HEK293 (cell line): ENCODE measurements at regions of chr19 and their contacts with region 1.

Region 1: DNA sequence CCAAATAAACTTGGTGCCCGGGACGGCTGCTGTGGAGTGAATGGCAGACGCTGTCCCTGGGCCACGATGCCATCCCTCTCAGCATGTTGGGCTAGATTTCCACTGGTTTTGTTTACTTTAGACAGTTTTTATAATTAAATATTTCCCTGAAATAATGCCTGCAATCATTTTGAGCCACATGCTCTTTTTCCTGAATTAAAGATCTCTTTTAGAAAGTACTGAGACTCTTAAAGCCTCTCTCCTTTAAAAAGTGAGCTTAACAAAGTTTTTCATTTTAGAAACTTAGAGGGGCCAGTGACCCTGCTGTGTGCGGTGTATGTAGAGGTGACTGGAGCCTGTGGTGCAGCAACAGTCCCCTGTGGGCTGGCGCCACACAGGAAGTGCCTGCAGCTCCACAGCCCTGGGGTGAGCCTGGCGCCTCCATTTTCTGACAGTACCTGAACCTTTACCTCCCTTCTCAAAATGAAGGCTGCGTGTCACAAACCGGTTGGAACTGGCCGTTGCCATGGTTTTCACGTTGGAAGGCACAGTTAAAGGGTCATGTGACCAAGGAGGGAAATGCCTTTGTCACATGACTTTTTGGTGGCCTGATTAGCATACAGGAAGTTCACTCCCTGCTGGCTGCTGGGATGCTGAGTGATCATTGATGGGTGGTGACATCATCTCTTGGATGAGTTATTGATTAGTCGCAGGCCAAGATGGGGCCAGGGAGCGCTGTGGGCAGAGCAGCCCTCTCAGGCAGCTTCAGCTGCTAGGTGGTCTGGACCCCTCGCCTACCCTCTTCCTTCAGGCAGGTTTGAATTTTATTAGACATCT is 26.3 kb downstream of the TSSK6 start:
- H3K4me3 ChIP-seq: no peak overlapping the region; the same call in 1 of the 2 replicates
- H3K27ac ChIP-seq: no peak overlapping the region; the same call in 1 of the 2 replicates
- H3K4me1 ChIP-seq: peaks cover 11% of the 10 kb centered on the region
- CTCF ChIP-seq: no peak

Region 2: DNA sequence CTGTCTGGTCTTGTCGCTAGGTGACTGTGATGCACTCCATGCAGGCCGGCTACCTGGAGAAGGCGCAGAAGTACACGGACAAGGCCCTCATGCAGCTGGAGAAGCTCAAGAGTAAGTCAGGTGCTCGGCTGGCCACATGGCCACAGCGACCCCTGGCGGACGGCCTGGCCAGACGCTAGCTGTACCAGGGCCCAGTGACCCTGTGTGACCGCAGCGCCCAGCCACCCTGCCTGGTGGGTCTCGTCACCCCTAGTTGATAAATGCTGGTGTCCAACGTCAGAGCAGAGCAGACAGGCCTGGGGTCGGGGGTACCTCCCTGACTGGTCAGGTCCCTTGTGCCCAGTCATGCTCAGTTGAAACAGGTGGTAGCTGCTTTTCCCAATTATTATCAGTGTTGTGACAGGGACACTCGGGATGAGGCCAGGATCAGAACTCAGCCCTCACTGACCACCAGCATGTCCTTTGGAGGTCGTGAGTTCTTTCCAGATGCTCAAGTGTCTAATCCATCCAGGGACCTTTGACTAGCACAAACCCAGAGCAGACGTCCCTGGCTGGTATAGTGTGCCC is 146.2 kb before region 1 on chr19:
- CTCF ChIA-PET with region 1: interaction called, 10 read pairs
- POLR2A ChIA-PET with region 1: interaction called, 3 read pairs
- H3K4me3 ChIP-seq: no peak overlapping the region
- H3K27ac ChIP-seq: no peak overlapping the region
- H3K4me1 ChIP-seq: no peaks in the 10 kb centered on the region
- CTCF ChIP-seq: peak; percentile 64

Region 3: GRCh38 chr19:19366612-19367396 is 122.3 kb before region 1 on chr19:
- CTCF ChIA-PET with region 1: interaction called, 49 read pairs
- POLR2A ChIA-PET with region 1: interaction called, 5 read pairs
- H3K4me3 ChIP-seq: peak overlapping the region; percentile 14
- H3K27ac ChIP-seq: peak overlapping the region; percentile 34; the same call in 1 of the 2 replicates
- H3K4me1 ChIP-seq: peaks cover 2% of the 10 kb centered on the region; the same call in 1 of the 2 replicates
- CTCF ChIP-seq: peak; percentile 88

Region 4: DNA sequence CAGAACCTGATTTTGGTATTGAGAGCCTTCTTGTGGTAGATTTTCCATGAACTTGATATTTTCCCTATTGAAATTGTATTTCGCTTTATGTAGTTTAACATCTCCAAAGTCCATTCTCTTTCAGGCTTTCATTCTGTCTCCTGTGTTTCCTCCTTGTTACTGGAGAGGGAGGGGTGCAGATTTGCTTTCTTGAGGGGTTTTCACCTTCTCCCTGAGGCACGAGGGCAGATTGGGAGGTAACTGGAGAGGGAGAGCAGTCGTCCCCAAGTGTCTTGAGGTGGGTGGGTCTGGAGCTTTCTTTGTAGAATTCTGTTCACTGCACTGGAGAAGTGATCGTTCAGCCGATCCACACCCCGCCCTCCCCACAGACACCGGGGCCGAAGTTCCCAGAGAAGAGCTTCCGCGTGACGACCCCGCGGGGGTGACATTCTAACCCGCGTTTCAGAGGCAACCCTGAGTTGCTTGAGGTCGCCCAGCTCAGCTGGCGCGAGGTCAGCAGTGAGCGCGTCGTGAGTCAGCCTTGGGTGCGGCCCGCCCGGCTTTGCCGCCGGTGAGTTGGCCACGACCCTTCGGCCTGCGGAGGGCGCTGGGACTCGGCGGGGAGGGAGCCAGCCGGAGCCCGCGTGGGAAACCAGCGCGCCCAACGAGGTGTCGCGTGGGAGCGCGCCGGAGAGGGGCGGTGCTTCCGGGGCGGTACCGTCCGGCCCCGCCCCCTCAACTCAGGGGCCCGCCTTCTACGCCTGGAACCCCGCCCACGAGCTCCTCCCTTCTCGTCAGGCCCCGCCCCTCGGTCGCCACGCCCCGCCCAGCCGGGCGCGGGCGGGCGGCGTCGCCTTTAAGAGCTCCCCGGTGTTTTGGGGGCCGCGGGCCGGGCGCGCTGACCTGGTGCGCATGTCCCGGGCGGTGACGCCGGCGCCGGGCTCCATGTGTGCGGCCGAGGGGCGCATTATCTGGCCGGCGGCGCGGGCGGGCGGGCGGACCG is 83.9 kb before region 1 on chr19 and contains the start of gene GATAD2A:
- CTCF ChIA-PET with region 1: interaction called, 10 read pairs
- POLR2A ChIA-PET with region 1: interaction called, 10 read pairs
- H3K4me3 ChIP-seq: peak within 1 kb of the TSS; percentile 78
- H3K27ac ChIP-seq: peak within 1 kb of the TSS; percentile 72
- H3K4me1 ChIP-seq: peaks cover 25% of the 10 kb centered on the region
- CTCF ChIP-seq: peak; percentile 59; the same call in 1 of the 2 replicates

Region 5: GRCh38 chr19:19475849-19476828 is 12.9 kb before region 1 on chr19:
- CTCF ChIA-PET with region 1: interaction called, 21 read pairs
- POLR2A ChIA-PET with region 1: no interaction called
- H3K4me3 ChIP-seq: no peak overlapping the region
- H3K27ac ChIP-seq: no peak overlapping the region
- H3K4me1 ChIP-seq: 0 out of 2 replicates have a peak, but pooled peaks cover 2% of the 10 kb centered on the region
- CTCF ChIP-seq: no peak

Region 6: DNA sequence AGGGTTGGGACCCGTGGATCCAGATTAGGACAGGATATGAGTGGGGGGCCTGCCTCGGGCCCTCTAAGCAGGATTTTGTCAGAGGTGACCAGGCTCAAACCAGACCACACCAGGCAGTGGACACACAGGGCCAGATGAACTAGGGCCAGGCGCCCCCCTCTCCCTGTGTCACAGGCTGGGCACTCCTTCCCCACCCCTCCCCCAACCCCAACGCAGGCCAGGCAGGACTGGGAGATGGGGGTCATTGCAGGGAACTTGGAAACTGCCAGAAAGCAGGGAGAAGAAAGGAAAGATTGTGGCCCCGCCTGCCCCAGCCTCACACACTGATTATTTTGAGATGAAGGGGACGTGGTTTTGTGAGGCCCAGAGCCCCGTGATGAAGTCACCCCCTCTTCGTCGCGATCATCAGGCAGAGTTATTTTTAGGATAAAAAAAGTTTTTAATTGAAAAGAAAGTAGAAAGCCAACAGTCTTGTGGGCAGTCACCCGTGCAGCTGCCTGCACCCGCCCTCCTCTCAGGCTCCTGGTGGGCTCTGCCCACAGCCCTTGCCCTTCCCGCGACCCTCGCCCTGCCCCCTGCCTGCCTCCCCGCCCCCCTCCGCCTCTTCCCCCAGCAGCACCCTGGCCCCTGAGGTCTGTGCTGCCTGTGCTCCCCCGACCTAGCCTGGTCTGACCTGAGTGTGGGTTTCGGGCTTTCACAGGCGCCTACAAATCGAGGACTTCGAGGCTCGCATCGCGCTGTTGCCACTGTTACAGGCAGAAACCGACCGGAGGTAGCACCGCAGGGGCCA is 37.7 kb after region 1 on chr19:
- CTCF ChIA-PET with region 1: no interaction called
- POLR2A ChIA-PET with region 1: no interaction called
- H3K4me3 ChIP-seq: no peak overlapping the region
- H3K27ac ChIP-seq: no peak overlapping the region
- H3K4me1 ChIP-seq: no peaks in the 10 kb centered on the region
- CTCF ChIP-seq: no peak

Region 7: GRCh38 chr19:19568802-19569756 is 80.0 kb after region 1 on chr19:
- CTCF ChIA-PET with region 1: no interaction called
- POLR2A ChIA-PET with region 1: no interaction called
- H3K4me3 ChIP-seq: no peak overlapping the region
- H3K27ac ChIP-seq: no peak overlapping the region
- H3K4me1 ChIP-seq: no peaks in the 10 kb centered on the region
- CTCF ChIP-seq: no peak